Astrocyte of the cerebellum (primary cell): ENCODE measurements at regions of chr4 and their contacts with region 1.

Region 1: GRCh38 chr4:156329779-156330178 is 376.1 kb upstream of the CTSO start:
- DNase-seq: no peak
- H3K4me3 ChIP-seq: no peak overlapping the region
- CTCF ChIP-seq: no peak

Region 2: DNA sequence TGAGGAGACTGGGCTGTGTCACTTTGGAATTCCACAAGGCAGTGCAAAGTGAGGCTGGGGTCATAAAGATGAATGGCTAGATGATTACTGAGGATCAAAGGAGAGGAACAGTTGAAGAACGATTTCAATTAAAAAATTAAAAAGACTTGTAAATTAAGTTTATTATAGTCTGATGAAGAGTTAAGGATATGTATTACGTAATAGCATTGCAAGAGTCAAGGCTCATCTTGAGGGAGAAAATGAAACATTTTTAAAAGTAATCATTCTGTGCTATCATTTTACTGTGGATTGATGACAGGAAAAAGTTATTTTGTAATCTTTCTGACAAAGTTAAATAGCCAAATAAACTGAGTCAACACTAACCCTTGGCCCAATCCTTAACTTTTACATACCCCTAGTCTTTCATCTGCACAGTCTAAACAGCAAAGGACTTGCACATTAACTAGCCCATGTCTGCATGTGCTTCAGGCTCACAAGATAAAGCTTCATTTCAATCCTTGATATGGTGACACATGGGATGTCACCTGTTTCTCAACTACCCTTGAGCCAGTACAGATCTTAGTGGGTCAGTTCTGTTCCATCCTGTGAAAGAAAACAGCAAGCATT is 89.4 kb after region 1 on chr4:
- in situ Hi-C with region 1: loop called (anchors 5 kb)
- DNase-seq: no peak
- H3K4me3 ChIP-seq: no peak overlapping the region
- CTCF ChIP-seq: no peak